ENCODE measurements at regions of chr15 and their contacts with region 1.

Region 1: GRCh38 chr15:74202452-74203428 is at the start of gene STRA6:
- DNase-seq: peak; percentile 75 to 85
- ATAC-seq: peak; percentile 82 to 83
- H3K4me3 ChIP-seq: peak within 1 kb of the TSS; percentile 51
- H3K27ac ChIP-seq: peak within 1 kb of the TSS; percentile 90 to 97
- H3K4me1 ChIP-seq: peaks cover 64% of the 10 kb centered on the region
- CTCF ChIP-seq: no peak
- EP300 ChIP-seq: no peak
- POLR2A ChIP-seq: peak; percentile 5; the same call in 1 of the 2 replicates
- RAD21 ChIP-seq: peak; percentile 37 to 39; a peak in 4 of 5 replicates
- polyA plus RNA-seq, gene STRA6: 35.0 and 49.8 TPM in 2 replicates

Region 2: DNA sequence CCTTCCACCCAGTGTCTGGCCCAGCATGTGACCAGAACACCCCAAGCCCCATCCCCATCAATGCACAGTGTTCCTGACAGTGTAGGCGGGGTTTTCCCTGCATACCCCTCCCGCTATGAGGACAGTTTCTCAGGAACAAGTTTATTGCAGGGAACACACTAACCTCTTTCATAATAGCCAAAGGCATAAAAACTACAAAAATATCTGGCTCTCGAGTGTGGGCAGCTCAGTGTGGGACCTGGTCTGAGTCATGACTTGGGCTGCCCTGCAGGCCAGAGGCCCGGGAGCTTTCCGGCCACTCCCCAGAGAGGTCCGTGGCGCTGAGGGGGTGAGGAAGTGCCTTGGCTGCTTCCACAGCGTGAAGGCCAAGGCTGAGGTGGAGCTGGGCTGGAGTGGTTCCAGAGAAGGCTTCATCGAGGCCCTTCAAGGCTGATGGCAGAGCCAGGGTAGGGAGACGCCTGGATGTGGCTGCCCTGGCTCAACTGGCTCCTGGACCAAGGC is 23.3 kb before region 1 on chr15:
- CTCF ChIA-PET with region 1: interaction called, 9 read pairs
- POLR2A ChIA-PET with region 1: interaction called, 19 read pairs
- DNase-seq: peak in 1 of 2 experiments; percentile 76
- ATAC-seq: peak; percentile 63 to 84
- H3K4me3 ChIP-seq: no peak overlapping the region
- H3K27ac ChIP-seq: peak overlapping the region; percentile 88 to 90
- H3K4me1 ChIP-seq: peaks cover 57% of the 10 kb centered on the region
- CTCF ChIP-seq: no peak
- EP300 ChIP-seq: peak; percentile 34 to 67; a peak in 2 of 5 replicates
- POLR2A ChIP-seq: no peak
- RAD21 ChIP-seq: no peak

Region 3: DNA sequence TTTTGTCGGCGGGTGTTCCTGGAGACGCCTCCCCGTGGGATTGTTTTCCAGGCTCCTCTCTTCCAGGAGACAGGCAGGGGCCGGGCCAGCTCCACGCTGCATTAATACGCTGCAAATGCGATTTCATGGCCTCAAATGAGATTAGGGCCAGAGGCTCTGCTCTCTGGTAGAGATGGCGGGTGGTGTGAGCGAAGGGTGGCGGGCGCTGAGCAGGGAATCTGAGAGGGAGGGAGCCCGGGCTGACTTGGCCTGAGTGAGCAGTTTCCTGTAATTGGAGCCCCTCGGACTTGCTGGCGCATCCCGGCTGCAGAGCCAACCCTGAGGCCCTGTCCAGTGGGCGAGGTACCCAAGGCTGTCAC is 26.0 kb after region 1 on chr15:
- CTCF ChIA-PET with region 1: no interaction called
- POLR2A ChIA-PET with region 1: no interaction called
- DNase-seq: no peak
- ATAC-seq: no peak
- H3K4me3 ChIP-seq: no peak overlapping the region
- H3K27ac ChIP-seq: no peak overlapping the region
- H3K4me1 ChIP-seq: peaks cover 20% of the 10 kb centered on the region
- CTCF ChIP-seq: no peak
- EP300 ChIP-seq: no peak
- POLR2A ChIP-seq: no peak
- RAD21 ChIP-seq: no peak

Measured in A549 (cell line).